T-cell (primary cell): ENCODE measurements at regions of chr14 and their contacts with region 1.

Region 1: GRCh38 chr14:24160850-24161804 is at the start of gene IRF9:
- DNase-seq: peak; percentile 90 to 99 (median 96)
- ATAC-seq: peak; percentile 89 to 90 (median 90)
- H3K4me3 ChIP-seq: peak within 1 kb of the TSS; percentile 86 to 98
- H3K4me3 Mint-ChIP-seq: peak within 1 kb of the TSS; percentile 92 to 94 (median 92)
- H3K27ac ChIP-seq: peak within 1 kb of the TSS; percentile 89
- H3K27ac Mint-ChIP-seq: peak within 1 kb of the TSS; percentile 98 to 99
- H3K4me1 ChIP-seq: peaks cover 8 to 61% of the 10 kb centered on the region in 2 experiments
- H3K4me1 Mint-ChIP-seq: peaks cover 54 to 58% (median 55%) of the 10 kb centered on the region in 3 donors
- H3K27me3 ChIP-seq: no peaks in the 10 kb centered on the region
- H3K27me3 Mint-ChIP-seq: no peaks in the 10 kb centered on the region
- total RNA-seq, gene IRF9: 201 to 285 (median 215) TPM

Region 2: GRCh38 chr14:23916004-23916403 is 245.1 kb before region 1 on chr14:
- CTCF ChIA-PET with region 1: no interaction called
- POLR2A ChIA-PET with region 1: no interaction called
- DNase-seq: no peak
- ATAC-seq: no peak
- H3K4me3 ChIP-seq: no peak overlapping the region
- H3K4me3 Mint-ChIP-seq: no peak overlapping the region
- H3K27ac ChIP-seq: no peak overlapping the region
- H3K27ac Mint-ChIP-seq: no peak overlapping the region
- H3K4me1 ChIP-seq: no peaks in the 10 kb centered on the region
- H3K4me1 Mint-ChIP-seq: no peaks in the 10 kb centered on the region
- H3K27me3 ChIP-seq: peaks cover 0 to 6% of the 10 kb centered on the region in 2 experiments
- H3K27me3 Mint-ChIP-seq: peaks cover 13 to 18% of the 10 kb centered on the region in 2 donors

Region 3: DNA sequence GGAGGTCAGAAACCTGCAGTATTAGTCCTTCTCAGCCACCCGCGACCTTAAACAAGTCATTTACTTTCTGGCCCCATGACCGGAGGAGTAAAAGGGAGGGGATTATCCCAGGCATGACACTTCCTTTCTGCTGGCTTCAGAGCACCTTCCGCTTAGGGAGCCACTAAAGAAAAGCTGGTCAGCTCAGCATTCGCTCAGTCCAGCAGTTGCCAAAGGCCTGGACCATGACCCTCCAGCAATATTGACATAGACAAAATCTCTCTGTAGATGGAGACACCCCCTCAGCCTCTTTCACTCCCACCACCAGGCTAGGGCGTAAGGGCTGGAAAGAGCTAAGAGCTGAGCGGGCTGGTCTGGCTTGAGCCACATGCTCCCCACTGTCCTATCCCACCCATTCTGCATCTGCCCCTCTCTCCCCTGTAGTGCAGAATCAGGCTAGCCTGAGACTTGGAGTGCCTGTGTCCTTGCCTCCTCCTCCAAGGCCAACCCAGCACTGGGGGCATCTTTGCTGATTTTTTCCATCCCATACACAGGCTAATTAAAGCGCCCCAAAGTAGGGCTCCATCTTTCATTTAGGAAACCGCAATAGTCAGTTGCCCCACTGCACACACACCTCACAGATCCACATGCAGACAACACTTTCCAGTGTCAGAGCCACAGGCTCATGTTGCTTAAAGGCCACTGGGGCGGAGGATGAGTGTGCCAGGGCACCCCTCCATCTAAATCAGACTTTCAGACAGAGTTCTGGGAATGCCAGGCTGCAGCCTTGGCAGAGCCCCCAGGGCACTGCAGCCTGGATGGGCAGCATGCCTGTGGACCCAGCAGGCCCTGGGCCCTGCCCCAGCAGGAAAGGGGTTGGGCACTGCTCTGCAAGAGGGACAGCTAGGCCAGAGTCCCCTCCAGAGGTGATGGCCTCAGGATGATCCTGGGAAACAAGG is 93.7 kb before region 1 on chr14:
- CTCF ChIA-PET with region 1: no interaction called
- POLR2A ChIA-PET with region 1: no interaction called
- DNase-seq: no peak
- ATAC-seq: no peak
- H3K4me3 ChIP-seq: no peak overlapping the region
- H3K4me3 Mint-ChIP-seq: no peak overlapping the region
- H3K27ac ChIP-seq: no peak overlapping the region
- H3K27ac Mint-ChIP-seq: no peak overlapping the region
- H3K4me1 ChIP-seq: no peaks in the 10 kb centered on the region
- H3K4me1 Mint-ChIP-seq: no peaks in the 10 kb centered on the region
- H3K27me3 ChIP-seq: peaks cover 0 to 44% of the 10 kb centered on the region in 2 experiments
- H3K27me3 Mint-ChIP-seq: peaks cover 6 to 14% of the 10 kb centered on the region in 2 donors

Region 4: GRCh38 chr14:24108336-24108874 is 52.7 kb before region 1 on chr14:
- CTCF ChIA-PET with region 1: interaction called in 1 of 2 experiments, 13 read pairs
- POLR2A ChIA-PET with region 1: no interaction called
- DNase-seq: no peak
- ATAC-seq: peak; percentile 29 to 41 (median 36)
- H3K4me3 ChIP-seq: no peak overlapping the region
- H3K4me3 Mint-ChIP-seq: peak overlapping the region in 1 of 3 donors; percentile 5
- H3K27ac ChIP-seq: peak overlapping the region; percentile 79
- H3K27ac Mint-ChIP-seq: peak overlapping the region; percentile 94 to 98
- H3K4me1 ChIP-seq: peaks cover 3 to 14% of the 10 kb centered on the region in 2 experiments
- H3K4me1 Mint-ChIP-seq: peaks cover 11 to 20% (median 13%) of the 10 kb centered on the region in 3 donors
- H3K27me3 ChIP-seq: no peaks in the 10 kb centered on the region
- H3K27me3 Mint-ChIP-seq: no peaks in the 10 kb centered on the region

Region 5: GRCh38 chr14:24135834-24136542 is 25.1 kb before region 1 on chr14 and contains the start of gene PSME1:
- CTCF ChIA-PET with region 1: interaction called in 1 of 2 experiments, 14 read pairs
- POLR2A ChIA-PET with region 1: interaction called in 1 of 2 experiments, 3 read pairs
- DNase-seq: peak; percentile 80 to 97 (median 92)
- ATAC-seq: peak; percentile 94 to 98 (median 95)
- H3K4me3 ChIP-seq: peak within 1 kb of the TSS; percentile 78 to 84
- H3K4me3 Mint-ChIP-seq: peak within 1 kb of the TSS; percentile 89 to 97 (median 91)
- H3K27ac ChIP-seq: peak within 1 kb of the TSS; percentile 79
- H3K27ac Mint-ChIP-seq: peak within 1 kb of the TSS; percentile 91 to 95
- H3K4me1 ChIP-seq: peaks cover 22 to 67% of the 10 kb centered on the region in 2 experiments
- H3K4me1 Mint-ChIP-seq: peaks cover 65 to 68% (median 67%) of the 10 kb centered on the region in 3 donors
- H3K27me3 ChIP-seq: no peaks in the 10 kb centered on the region
- H3K27me3 Mint-ChIP-seq: no peaks in the 10 kb centered on the region
- total RNA-seq, gene PSME1: 221 to 291 (median 259) TPM

Region 6: DNA sequence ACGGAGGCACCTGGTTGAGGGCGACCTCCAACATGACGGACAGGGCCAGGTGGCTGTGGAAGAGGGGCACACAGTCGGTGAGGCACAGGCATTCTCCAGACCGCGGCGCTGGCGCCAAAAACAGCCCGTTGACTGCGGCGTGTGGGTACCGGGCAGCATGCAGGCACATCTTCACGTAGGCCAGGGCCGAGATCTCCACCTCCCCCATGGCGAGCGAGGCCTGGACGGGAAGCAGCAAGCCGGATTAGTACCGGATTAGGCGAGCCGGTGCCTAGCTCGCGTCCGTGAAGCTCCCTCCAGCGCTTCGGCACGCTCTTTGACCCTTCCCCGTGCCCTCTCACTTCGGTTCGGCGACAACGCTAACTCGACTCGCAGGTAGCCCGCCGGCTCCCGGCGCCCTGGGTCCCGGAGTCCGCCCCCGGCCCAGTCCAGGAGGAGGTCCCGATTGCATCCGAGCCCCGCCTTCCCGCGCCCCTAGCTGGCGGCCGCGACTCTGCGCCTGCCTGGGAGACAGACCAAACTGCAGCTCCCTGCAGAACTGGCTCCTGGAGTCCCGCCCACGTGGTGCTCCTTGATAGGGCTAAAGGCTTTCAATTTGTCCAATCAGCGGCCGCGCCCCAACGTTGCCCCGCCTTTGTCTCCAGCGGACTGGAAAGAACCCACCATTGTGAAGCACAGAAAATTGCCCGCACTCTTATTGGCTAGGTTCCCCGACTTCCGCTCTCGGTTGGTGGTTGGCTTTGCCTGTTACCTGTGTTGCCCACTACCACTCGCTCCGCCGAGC is 19.8 kb before region 1 on chr14 and contains the start of gene EMC9:
- CTCF ChIA-PET with region 1: interaction called in 1 of 2 experiments, 30 read pairs
- POLR2A ChIA-PET with region 1: interaction called, 3 to 7 read pairs
- DNase-seq: peak; percentile 98 to 100 (median 99)
- ATAC-seq: peak; percentile 90 to 93 (median 90)
- H3K4me3 ChIP-seq: peak within 1 kb of the TSS; percentile 69 to 90
- H3K4me3 Mint-ChIP-seq: peak within 1 kb of the TSS; percentile 85 to 97 (median 88)
- H3K27ac ChIP-seq: peak within 1 kb of the TSS; percentile 63
- H3K27ac Mint-ChIP-seq: peak within 1 kb of the TSS; percentile 90 to 92
- H3K4me1 ChIP-seq: peaks cover 22 to 72% of the 10 kb centered on the region in 2 experiments
- H3K4me1 Mint-ChIP-seq: peaks cover 80 to 84% (median 82%) of the 10 kb centered on the region in 3 donors
- H3K27me3 ChIP-seq: no peaks in the 10 kb centered on the region
- H3K27me3 Mint-ChIP-seq: no peaks in the 10 kb centered on the region
- total RNA-seq, gene EMC9: 9.3 to 29.8 (median 20.8) TPM

Region 7: GRCh38 chr14:24146978-24147760 is 14.0 kb before region 1 on chr14 and contains the start of gene RNF31:
- CTCF ChIA-PET with region 1: interaction called, 3 to 30 read pairs
- POLR2A ChIA-PET with region 1: interaction called, 3 to 7 read pairs
- DNase-seq: peak; percentile 90 to 99 (median 97)
- ATAC-seq: peak; percentile 89 to 93 (median 90)
- H3K4me3 ChIP-seq: peak within 1 kb of the TSS; percentile 69 to 91
- H3K4me3 Mint-ChIP-seq: peak within 1 kb of the TSS; percentile 96 to 99 (median 97)
- H3K27ac ChIP-seq: peak within 1 kb of the TSS; percentile 82
- H3K27ac Mint-ChIP-seq: peak within 1 kb of the TSS; percentile 95 to 99
- H3K4me1 ChIP-seq: peaks cover 17 to 58% of the 10 kb centered on the region in 2 experiments
- H3K4me1 Mint-ChIP-seq: peaks cover 64 to 69% (median 66%) of the 10 kb centered on the region in 3 donors
- H3K27me3 ChIP-seq: no peaks in the 10 kb centered on the region
- H3K27me3 Mint-ChIP-seq: no peaks in the 10 kb centered on the region
- total RNA-seq, gene RNF31: 67.7 to 131 (median 100) TPM